Transverse colon (tissue), 4 donors: ENCODE measurements at regions of chr11 and their contacts with region 1.

Region 1: GRCh38 chr11:47914743-47915142 is 65.6 kb upstream of the PTPRJ start:
- DNase-seq: no peak
- H3K4me3 ChIP-seq: no peak overlapping the region
- H3K27ac ChIP-seq: no peak overlapping the region
- H3K4me1 ChIP-seq: peaks cover 0 to 15% (median 0%) of the 10 kb centered on the region in 4 donors
- H3K27me3 ChIP-seq: no peaks in the 10 kb centered on the region
- CTCF ChIP-seq: no peak
- EP300 ChIP-seq: no peak
- POLR2A ChIP-seq: no peak

Region 2: GRCh38 chr11:47899801-47900200 is 14.9 kb before region 1 on chr11:
- in situ Hi-C with region 1: no loop called
- intact Hi-C with region 1: loop called (anchors 1 kb)
- DNase-seq: peak; percentile 19
- H3K4me3 ChIP-seq: no peak overlapping the region
- H3K27ac ChIP-seq: no peak overlapping the region
- H3K4me1 ChIP-seq: no peaks in the 10 kb centered on the region
- H3K27me3 ChIP-seq: no peaks in the 10 kb centered on the region
- CTCF ChIP-seq: no peak
- EP300 ChIP-seq: no peak
- POLR2A ChIP-seq: no peak